ENCODE measurements at regions of chr3 and their contacts with region 1.

Region 1: GRCh38 chr3:45758871-45759270 is 37.5 kb downstream of the SLC6A20 start:
- DNase-seq: no peak
- H3K4me3 ChIP-seq: no peak overlapping the region
- H3K27ac ChIP-seq: no peak overlapping the region
- H3K4me1 ChIP-seq: no peaks in the 10 kb centered on the region
- H3K27me3 ChIP-seq: peaks cover 0 to 22% (median 0%) of the 10 kb centered on the region in 4 donors
- CTCF ChIP-seq: no peak
- POLR2A ChIP-seq: no peak

Region 2: GRCh38 chr3:45923755-45924154 is 164.9 kb after region 1 on chr3:
- intact Hi-C with region 1: loop called (anchors 5 kb)
- DNase-seq: no peak
- H3K4me3 ChIP-seq: no peak overlapping the region
- H3K27ac ChIP-seq: no peak overlapping the region
- H3K4me1 ChIP-seq: no peaks in the 10 kb centered on the region
- H3K27me3 ChIP-seq: no peaks in the 10 kb centered on the region
- CTCF ChIP-seq: no peak
- POLR2A ChIP-seq: no peak